RWPE1 (cell line): ENCODE measurements at regions of chr19 and their contacts with region 1.

Region 1: DNA sequence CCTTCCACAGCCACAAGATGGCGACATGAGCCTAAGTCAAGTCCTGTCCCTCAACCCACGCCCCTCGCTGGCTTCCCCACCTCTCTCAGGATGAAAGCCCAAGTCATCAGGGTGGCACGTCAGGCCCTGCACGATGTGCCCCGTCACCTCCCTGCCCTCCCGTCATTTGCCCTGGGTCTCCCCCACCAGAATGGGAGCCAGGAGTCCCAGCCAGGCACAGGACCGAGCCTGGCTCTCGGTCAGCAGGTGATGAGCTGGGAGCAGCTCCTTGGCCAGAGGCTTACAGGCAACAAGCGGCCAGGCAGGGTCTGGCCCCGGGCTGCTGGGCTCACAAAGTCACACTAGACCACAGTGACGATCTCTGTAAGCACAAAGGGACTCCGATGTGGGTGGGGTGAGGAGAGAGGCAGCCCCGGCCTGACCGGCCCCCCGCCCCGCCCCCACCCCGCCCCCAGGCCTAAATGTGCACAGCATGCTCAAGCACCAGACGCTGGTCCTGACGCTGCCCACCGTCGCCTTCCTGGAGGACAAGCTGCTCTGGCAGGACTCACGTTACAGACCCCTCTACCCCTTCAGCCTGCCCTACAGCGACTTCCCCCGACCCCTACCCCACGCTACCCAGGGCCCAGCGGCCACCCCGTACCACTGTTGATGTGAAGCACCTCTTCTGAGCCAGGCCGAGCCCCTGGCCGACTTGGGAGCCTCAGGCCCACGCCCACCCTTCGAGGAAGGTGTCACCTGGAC is 7.3 kb downstream of the MRPL4 start:
- DNase-seq: peak; percentile 66
- H3K27ac ChIP-seq: peak overlapping the region; percentile 44
- CTCF ChIP-seq: peak; percentile 79

Region 2: DNA sequence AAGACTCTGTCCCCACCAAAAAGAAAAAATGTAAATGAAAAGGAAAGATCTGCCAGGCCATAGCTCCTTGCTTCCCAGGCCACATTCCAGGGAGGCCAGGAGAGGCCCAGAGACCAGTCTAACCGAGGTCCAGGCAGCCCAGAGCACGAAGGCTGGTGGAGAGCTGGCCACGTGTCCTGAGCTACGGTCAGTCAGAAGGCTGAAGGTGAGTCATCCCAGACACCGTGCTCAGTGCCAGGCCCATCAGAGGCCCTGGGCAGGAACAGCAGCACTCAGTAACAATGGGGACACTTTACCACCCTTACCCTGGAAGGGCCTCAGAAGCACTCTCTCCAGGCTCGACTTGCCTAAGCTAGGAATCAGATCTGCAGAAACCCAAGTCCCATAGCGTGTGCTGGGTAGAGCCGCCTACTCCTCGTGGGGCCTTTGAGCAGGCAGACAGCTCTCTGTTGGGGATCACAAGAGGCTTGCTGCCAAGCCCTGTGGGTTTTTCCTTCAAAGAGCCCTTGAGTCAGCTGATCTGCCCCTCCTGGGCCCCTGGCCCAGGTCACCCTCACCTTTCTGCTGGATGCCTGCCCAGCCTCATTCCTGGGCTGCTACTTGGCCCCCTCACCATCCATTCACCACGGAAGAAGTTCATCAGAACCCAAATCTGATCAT is 53.0 kb before region 1 on chr19:
- CTCF ChIA-PET with region 1: no interaction called
- POLR2A ChIA-PET with region 1: no interaction called
- DNase-seq: no peak
- H3K27ac ChIP-seq: no peak overlapping the region
- CTCF ChIP-seq: no peak

Region 3: GRCh38 chr19:10269333-10270179 is 10.2 kb after region 1 on chr19:
- CTCF ChIA-PET with region 1: interaction called, 33 read pairs
- POLR2A ChIA-PET with region 1: no interaction called
- DNase-seq: peak; percentile 69
- H3K27ac ChIP-seq: no peak overlapping the region
- CTCF ChIP-seq: peak; percentile 96

Region 4: DNA sequence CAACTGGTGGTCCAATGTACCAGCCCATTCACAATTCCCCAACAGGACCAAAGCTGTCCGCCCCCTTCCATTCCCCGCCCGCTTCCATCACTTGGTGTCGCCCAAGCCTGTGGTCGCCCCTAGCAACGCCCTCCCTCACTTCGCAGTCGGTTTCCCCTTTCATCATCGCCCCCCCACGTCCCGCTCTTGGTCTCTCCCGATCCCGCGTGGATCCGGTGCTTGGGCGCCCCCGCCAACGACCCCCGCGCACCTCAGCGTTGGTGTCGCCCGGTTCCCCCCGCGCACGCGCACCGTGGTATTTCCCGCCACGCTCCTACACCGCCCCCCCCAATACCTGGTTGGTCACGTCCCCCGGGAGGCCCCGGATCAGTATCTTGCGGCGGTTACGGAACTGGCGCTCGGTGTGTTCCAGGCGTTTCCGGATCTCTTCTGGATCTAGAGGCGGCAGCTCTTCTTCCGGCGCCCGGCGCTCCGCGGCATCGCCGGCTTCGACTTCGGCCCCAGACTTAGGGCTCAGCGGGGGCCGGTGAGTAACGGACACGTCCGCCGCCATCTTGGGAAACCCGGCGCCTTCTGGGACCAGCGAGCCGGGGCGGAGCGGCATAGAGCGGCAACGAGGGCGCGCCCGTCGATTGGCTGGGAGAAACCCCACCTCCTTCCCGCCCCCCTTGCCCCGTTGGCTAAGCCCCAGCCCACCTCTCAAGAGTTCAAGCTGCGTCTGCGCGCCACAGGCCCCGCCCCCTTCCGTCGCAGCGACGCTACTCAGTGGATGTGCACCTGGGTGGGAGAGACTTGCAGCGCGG is 73.8 kb after region 1 on chr19 and contains the start of gene RAVER1:
- CTCF ChIA-PET with region 1: no interaction called
- POLR2A ChIA-PET with region 1: interaction called, 10 read pairs
- DNase-seq: peak; percentile 99
- H3K27ac ChIP-seq: peak within 1 kb of the TSS; percentile 91
- CTCF ChIP-seq: no peak

Region 5: GRCh38 chr19:10388957-10389356 is 129.6 kb after region 1 on chr19:
- CTCF ChIA-PET with region 1: interaction called, 36 read pairs
- POLR2A ChIA-PET with region 1: no interaction called
- DNase-seq: peak; percentile 64
- H3K27ac ChIP-seq: no peak overlapping the region
- CTCF ChIP-seq: peak; percentile 90